Panc1 (cell line): ENCODE measurements at regions of chr17 and their contacts with region 1.

Region 1: DNA sequence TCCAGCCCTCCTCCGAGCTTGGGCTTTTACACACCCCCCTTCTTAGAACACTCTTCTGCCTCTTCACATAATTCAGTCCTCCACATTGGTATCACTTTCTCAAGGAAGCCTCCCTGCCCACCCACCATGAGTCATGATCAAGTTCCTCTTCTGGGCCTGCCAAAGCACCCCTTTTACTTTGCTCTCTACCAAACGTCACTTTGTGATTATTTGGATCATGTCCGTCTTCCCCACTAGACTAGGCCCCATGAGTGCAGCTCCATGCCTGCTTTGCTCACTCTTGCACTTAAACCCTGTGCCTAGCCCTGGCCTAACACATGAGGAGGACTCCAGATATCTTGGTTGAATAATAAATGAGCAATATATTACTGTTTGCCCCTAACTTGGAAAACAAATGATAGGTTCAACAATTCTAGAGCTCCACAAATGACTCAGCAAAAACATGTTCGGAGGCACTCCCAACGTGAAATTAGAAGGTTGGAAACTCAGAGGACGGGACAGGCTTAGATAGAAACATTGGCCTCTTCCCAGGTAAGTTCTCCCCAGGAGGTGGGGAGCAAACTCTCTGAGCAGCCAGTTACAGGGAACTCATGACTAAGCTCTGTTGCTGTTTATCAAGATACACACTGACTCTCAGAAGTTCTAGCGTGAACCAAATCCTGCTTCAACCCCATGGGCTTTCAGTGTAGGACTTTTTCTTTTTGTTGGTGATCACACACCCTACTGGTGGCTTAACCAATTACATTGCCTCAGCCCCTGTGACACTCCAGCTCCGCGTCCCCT is 28.3 kb downstream of the G6PC1 start:
- DNase-seq: no peak
- ATAC-seq: peak; percentile 90
- H3K4me3 ChIP-seq: no peak overlapping the region
- H3K27ac ChIP-seq: no peak overlapping the region
- H3K4me1 ChIP-seq: no peaks in the 10 kb centered on the region
- H3K27me3 ChIP-seq: no peaks in the 10 kb centered on the region
- CTCF ChIP-seq: peak; percentile 63

Region 2: DNA sequence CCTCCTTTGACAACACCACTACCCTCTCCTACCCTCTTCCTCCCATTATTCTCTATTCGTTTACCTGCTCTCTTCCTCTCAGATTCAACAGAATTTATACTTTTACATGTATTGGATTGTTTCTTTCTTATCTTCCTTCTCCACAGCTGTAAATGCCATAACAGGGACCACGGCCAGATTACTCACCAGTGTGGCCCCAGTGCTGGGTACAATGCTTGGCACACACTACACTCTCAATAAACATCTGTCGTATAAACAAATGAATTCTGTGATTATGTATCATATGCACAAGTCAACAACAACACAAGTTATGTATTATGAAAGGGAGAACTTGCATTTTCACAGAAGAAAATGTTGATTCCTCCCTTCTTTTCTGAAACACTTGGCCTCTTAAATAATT is 15.3 kb after region 1 on chr17:
- CTCF ChIA-PET with region 1: interaction called, 11 read pairs
- POLR2A ChIA-PET with region 1: no interaction called
- in situ Hi-C with region 1: no loop called
- intact Hi-C with region 1: no loop called
- DNase-seq: no peak
- ATAC-seq: no peak
- H3K4me3 ChIP-seq: no peak overlapping the region
- H3K27ac ChIP-seq: no peak overlapping the region
- H3K4me1 ChIP-seq: no peaks in the 10 kb centered on the region
- H3K27me3 ChIP-seq: no peaks in the 10 kb centered on the region
- CTCF ChIP-seq: no peak

Region 3: DNA sequence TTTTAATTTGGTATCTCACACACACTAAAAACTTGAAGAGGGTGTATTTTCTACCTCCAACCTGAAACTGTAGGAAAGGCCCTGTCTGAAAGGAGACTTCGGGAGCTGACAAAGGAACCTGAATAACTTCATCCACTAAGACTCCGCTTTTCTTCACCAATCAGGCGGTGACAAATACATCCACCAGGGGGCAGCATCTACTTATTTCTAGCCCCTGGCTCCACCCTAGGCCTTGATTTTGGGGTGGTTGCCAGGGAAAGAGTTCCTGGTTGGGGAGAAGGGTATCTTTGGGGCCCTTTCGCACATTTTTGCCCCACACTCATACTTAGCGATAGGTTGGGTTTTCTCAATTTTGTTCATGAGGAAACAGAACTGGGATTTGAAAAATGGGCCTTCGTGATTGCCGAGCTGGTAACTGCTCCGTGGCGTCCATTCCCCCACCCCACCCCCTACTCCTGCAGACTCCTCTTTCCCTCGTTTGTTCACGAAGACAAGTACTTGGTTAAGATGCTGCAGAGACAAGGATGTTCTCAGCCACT is 465.1 kb after region 1 on chr17:
- CTCF ChIA-PET with region 1: no interaction called
- POLR2A ChIA-PET with region 1: no interaction called
- in situ Hi-C with region 1: no loop called
- intact Hi-C with region 1: no loop called
- DNase-seq: no peak
- ATAC-seq: peak; percentile 72
- H3K4me3 ChIP-seq: no peak overlapping the region
- H3K27ac ChIP-seq: peak overlapping the region; percentile 2; the same call in 1 of the 2 replicates
- H3K4me1 ChIP-seq: peaks cover 4% of the 10 kb centered on the region
- H3K27me3 ChIP-seq: no peaks in the 10 kb centered on the region
- CTCF ChIP-seq: peak; percentile 81